A549 (cell line): ENCODE measurements at regions of chr5 and their contacts with region 1.

Region 1: GRCh38 chr5:1641560-1642166 is 117.9 kb upstream of the LPCAT1 start:
- DNase-seq: peak; percentile 88 to 91
- ATAC-seq: peak; percentile 66 to 86
- H3K4me3 ChIP-seq: no peak overlapping the region
- H3K27ac ChIP-seq: no peak overlapping the region
- H3K4me1 ChIP-seq: 0 out of 3 replicates have a peak, but pooled peaks cover 4% of the 10 kb centered on the region
- CTCF ChIP-seq: peak; percentile 98
- EP300 ChIP-seq: no peak
- POLR2A ChIP-seq: no peak
- RAD21 ChIP-seq: peak; percentile 75 to 81

Region 2: GRCh38 chr5:1174122-1174936 is 467.3 kb before region 1 on chr5:
- CTCF ChIA-PET with region 1: interaction called, 45 read pairs
- POLR2A ChIA-PET with region 1: no interaction called
- DNase-seq: peak; percentile 79 to 87
- ATAC-seq: peak; percentile 83 to 91
- H3K4me3 ChIP-seq: peak overlapping the region; percentile 33; the same call in 2 of the 3 replicates
- H3K27ac ChIP-seq: peak overlapping the region; percentile 73 to 74
- H3K4me1 ChIP-seq: peaks cover 5% of the 10 kb centered on the region
- CTCF ChIP-seq: peak; percentile 81
- EP300 ChIP-seq: no peak
- POLR2A ChIP-seq: no peak
- RAD21 ChIP-seq: peak; percentile 72 to 73

Region 3: DNA sequence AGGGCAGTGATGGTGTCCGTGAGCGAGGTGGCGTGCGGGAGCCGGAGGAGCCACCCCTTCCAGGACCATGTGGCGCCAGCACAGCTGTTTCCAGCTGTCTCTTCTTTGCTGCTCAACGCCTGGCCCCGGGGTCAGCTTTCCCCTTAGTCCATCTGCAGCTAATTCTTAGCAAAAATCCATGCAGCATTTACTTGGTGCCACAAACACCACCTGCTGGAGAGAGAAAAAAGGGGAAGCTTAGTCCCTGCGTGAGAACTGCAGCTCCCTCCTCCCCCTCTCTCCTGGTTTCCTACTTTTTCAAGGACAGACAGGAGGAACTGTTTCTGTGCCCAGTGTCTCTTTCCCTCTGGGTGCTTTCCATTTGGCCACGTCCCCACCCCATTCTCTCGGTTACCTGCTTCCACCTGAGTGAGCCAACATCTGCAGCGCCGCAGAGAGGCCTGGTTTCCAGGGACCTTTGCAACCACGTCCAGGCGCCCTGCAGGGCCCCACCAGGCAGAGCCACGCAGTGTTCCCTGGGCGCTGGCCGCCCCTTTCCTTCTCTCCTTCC is 436.9 kb before region 1 on chr5:
- CTCF ChIA-PET with region 1: interaction called, 63 read pairs
- POLR2A ChIA-PET with region 1: no interaction called
- DNase-seq: peak; percentile 28 to 58
- ATAC-seq: peak; percentile 25 to 57; a peak in 5 of 6 replicates
- H3K4me3 ChIP-seq: no peak overlapping the region
- H3K27ac ChIP-seq: no peak overlapping the region
- H3K4me1 ChIP-seq: no peaks in the 10 kb centered on the region; the same call in 2 of the 3 replicates
- CTCF ChIP-seq: no peak
- EP300 ChIP-seq: no peak
- POLR2A ChIP-seq: no peak
- RAD21 ChIP-seq: no peak

Region 4: DNA sequence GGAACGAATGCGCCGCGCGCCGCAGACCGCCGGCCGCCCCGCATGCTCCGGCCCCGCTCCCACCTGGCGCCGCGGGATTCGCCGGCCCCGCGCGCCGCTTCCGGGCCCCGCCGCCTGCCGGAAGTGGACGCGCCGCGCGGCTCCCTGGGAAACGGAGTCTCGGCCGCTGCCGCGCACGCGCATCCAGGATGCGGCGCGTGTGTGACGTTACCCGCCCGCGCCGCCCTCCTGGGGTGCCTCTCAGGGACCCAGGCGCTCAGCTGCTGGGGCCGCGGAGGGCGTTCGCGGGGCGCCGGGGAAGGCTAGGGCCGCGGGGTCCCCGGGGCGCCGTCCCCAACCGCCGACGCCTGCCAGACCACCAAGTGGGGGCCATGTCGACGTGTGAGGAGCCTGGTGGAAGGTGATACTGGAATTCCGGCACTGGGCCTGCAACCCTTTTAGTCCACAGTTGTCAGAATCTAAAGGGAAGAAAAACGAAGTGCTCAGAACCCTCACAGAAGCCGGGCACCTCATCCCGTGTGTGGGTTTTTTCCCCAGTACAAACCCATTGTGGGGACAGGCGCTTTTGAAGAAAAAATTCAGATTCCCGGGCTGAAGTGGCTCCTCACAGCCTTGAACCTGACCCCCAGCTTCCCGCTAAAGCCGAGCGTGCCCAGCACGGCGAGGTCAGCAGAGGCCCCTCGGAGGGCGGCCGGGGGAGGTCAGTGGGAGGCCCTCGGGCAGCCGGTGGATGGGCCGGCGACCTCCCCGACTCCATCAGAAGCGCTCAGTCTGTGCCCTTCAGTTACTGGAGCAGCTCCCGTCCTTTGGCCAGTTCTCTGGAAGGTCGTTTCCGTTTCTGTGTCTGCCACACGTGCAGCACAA is 296.5 kb before region 1 on chr5 and contains the start of gene CLPTM1L:
- CTCF ChIA-PET with region 1: interaction called, 10 read pairs
- POLR2A ChIA-PET with region 1: no interaction called
- DNase-seq: peak; percentile 86 to 95
- ATAC-seq: peak; percentile 88 to 93
- H3K4me3 ChIP-seq: peak within 1 kb of the TSS; percentile 92
- H3K27ac ChIP-seq: peak within 1 kb of the TSS; percentile 89 to 93
- H3K4me1 ChIP-seq: peaks cover 19% of the 10 kb centered on the region
- CTCF ChIP-seq: no peak
- EP300 ChIP-seq: no peak
- POLR2A ChIP-seq: peak; percentile 73
- RAD21 ChIP-seq: no peak
- polyA plus RNA-seq, gene CLPTM1L: 171 and 175 TPM in 2 replicates

Region 5: GRCh38 chr5:1380011-1380817 is 261.4 kb before region 1 on chr5:
- CTCF ChIA-PET with region 1: interaction called, 36 read pairs
- POLR2A ChIA-PET with region 1: no interaction called
- DNase-seq: peak in 1 of 2 experiments; percentile 78
- ATAC-seq: peak; percentile 85 to 98
- H3K4me3 ChIP-seq: peak overlapping the region; percentile 21; the same call in 2 of the 3 replicates
- H3K27ac ChIP-seq: peak overlapping the region in 1 of 2 experiments; percentile 38; a peak in 1 of 6 replicates
- H3K4me1 ChIP-seq: 0 out of 3 replicates have a peak, but pooled peaks cover 8% of the 10 kb centered on the region
- CTCF ChIP-seq: peak; percentile 79
- EP300 ChIP-seq: no peak
- POLR2A ChIP-seq: no peak
- RAD21 ChIP-seq: peak; percentile 49 to 72

Region 6: GRCh38 chr5:1488943-1489680 is 152.6 kb before region 1 on chr5:
- CTCF ChIA-PET with region 1: interaction called, 10 read pairs
- POLR2A ChIA-PET with region 1: no interaction called
- DNase-seq: no peak
- ATAC-seq: peak; percentile 39 to 43; a peak in 2 of 6 replicates
- H3K4me3 ChIP-seq: no peak overlapping the region
- H3K27ac ChIP-seq: peak overlapping the region in 1 of 2 experiments; percentile 64; a peak in 3 of 6 replicates
- H3K4me1 ChIP-seq: peaks cover 10% of the 10 kb centered on the region; the same call in 1 of the 3 replicates
- CTCF ChIP-seq: no peak
- EP300 ChIP-seq: no peak
- POLR2A ChIP-seq: no peak
- RAD21 ChIP-seq: no peak

Region 7: GRCh38 chr5:1652596-1653345 is 11.1 kb after region 1 on chr5:
- CTCF ChIA-PET with region 1: interaction called, 75 read pairs
- POLR2A ChIA-PET with region 1: no interaction called
- DNase-seq: no peak
- ATAC-seq: peak in 1 of 2 experiments; percentile 3; a peak in 2 of 6 replicates
- H3K4me3 ChIP-seq: peak overlapping the region; percentile 37; the same call in 1 of the 3 replicates
- H3K27ac ChIP-seq: no peak overlapping the region
- H3K4me1 ChIP-seq: peaks cover 10% of the 10 kb centered on the region; the same call in 2 of the 3 replicates
- CTCF ChIP-seq: no peak
- EP300 ChIP-seq: no peak
- POLR2A ChIP-seq: no peak
- RAD21 ChIP-seq: no peak